Heart left ventricle (tissue), 16 donors: ENCODE measurements at regions of chr5 and their contacts with region 1.

Region 1: GRCh38 chr5:126917918-126918614 is 112.3 kb downstream of the MARCHF3 start:
- DNase-seq: no peak
- ATAC-seq: no peak
- H3K4me3 ChIP-seq: no peak overlapping the region
- H3K27ac ChIP-seq: peak overlapping the region in 1 of 12 donors; percentile 30
- H3K4me1 ChIP-seq: peaks cover 9 to 55% (median 33%) of the 10 kb centered on the region in 12 donors
- H3K27me3 ChIP-seq: no peaks in the 10 kb centered on the region
- CTCF ChIP-seq: no peak
- POLR2A ChIP-seq: no peak

Region 2: DNA sequence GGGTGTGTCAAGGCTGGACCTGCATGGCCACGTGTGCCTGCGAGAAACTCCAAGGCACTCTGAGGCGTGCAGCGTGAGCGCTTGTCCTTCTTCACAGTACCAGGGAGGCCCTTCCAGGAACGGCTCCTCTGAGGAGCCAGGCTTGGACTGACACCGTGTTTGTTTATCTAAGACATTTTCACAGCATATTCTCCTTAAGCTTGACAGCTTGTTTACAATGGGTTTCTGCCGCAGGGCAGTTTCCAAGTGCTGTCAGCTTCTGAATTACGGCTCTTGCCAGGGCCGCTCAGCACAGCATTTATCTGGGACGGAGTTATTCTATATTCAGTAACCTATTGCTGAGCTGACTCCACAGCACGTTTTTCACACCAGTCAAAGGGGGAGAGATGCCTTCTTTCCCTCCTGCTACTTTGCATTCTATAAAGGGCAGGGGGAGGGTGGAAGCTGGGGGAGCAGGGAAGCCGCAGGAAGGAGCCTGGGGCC is 42.7 kb before region 1 on chr5:
- intact Hi-C with region 1: loop called in 1 of 10 experiments (anchors 5 kb)
- DNase-seq: no peak
- ATAC-seq: peak; percentile 21 to 65 (median 48)
- H3K4me3 ChIP-seq: no peak overlapping the region
- H3K27ac ChIP-seq: no peak overlapping the region
- H3K4me1 ChIP-seq: peaks cover 0 to 19% (median 0%) of the 10 kb centered on the region in 12 donors
- H3K27me3 ChIP-seq: no peaks in the 10 kb centered on the region
- CTCF ChIP-seq: no peak
- POLR2A ChIP-seq: no peak

Region 3: GRCh38 chr5:126954981-126955380 is 36.9 kb after region 1 on chr5:
- intact Hi-C with region 1: loop called in 1 of 10 experiments (anchors 5 kb)
- DNase-seq: no peak
- ATAC-seq: no peak
- H3K4me3 ChIP-seq: no peak overlapping the region
- H3K27ac ChIP-seq: no peak overlapping the region
- H3K4me1 ChIP-seq: peaks cover 0 to 10% (median 0%) of the 10 kb centered on the region in 12 donors
- H3K27me3 ChIP-seq: no peaks in the 10 kb centered on the region
- CTCF ChIP-seq: no peak
- POLR2A ChIP-seq: no peak